HepG2 (cell line): ENCODE measurements at regions of chr15 and their contacts with region 1.

Region 1: GRCh38 chr15:60682115-60682514 is 203.2 kb upstream of the ICE2 start:
- DNase-seq: no peak
- ATAC-seq: no peak
- H3K4me3 ChIP-seq: no peak overlapping the region
- H3K27ac ChIP-seq: no peak overlapping the region
- H3K4me1 ChIP-seq: 0 out of 2 replicates have a peak, but pooled peaks cover 8% of the 10 kb centered on the region
- H3K27me3 ChIP-seq: peaks cover 0 to 14% of the 10 kb centered on the region in 2 experiments; a peak in 3 of 5 replicates
- CTCF ChIP-seq: no peak
- EP300 ChIP-seq: no peak
- POLR2A ChIP-seq: no peak
- RAD21 ChIP-seq: no peak

Region 2: DNA sequence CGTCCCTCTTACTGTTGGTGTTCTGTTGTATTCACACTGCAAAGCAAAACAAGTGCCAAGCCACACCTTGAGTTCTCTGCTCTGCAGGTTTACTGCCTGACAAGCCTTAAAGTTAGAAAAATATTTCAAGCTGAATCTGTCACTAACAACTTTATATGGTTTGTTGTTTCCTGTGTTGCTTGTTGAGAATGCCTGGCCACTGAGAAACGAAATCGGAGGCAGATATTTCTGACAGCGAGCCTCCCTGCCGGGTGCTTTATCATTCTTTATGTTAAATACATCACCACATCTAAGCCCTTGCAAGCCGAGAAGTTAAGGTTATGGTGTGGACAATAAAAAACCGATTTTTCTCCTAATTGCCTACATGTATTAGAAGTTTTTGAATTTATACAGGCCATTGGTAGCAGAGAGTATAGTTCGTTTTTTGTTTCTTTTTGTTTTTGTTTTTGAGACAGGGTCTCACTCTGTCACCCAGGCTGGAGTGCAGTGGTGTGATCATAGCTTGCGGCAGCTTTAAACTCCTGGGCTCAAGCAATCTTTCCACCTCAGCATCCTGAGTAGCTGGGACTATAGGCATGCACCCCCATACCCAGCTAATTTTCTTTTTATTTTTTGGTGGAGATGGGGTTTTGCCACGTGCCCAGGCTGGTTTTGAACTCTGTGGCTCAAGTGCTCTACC is 14.8 kb before region 1 on chr15:
- CTCF ChIA-PET with region 1: no interaction called
- POLR2A ChIA-PET with region 1: no interaction called
- in situ Hi-C with region 1: no loop called
- intact Hi-C with region 1: no loop called
- DNase-seq: no peak
- ATAC-seq: no peak
- H3K4me3 ChIP-seq: no peak overlapping the region
- H3K27ac ChIP-seq: no peak overlapping the region
- H3K4me1 ChIP-seq: no peaks in the 10 kb centered on the region
- H3K27me3 ChIP-seq: peaks cover 1 to 41% of the 10 kb centered on the region in 2 experiments; a peak in 4 of 5 replicates
- CTCF ChIP-seq: no peak
- EP300 ChIP-seq: no peak
- POLR2A ChIP-seq: no peak
- RAD21 ChIP-seq: no peak

Region 3: DNA sequence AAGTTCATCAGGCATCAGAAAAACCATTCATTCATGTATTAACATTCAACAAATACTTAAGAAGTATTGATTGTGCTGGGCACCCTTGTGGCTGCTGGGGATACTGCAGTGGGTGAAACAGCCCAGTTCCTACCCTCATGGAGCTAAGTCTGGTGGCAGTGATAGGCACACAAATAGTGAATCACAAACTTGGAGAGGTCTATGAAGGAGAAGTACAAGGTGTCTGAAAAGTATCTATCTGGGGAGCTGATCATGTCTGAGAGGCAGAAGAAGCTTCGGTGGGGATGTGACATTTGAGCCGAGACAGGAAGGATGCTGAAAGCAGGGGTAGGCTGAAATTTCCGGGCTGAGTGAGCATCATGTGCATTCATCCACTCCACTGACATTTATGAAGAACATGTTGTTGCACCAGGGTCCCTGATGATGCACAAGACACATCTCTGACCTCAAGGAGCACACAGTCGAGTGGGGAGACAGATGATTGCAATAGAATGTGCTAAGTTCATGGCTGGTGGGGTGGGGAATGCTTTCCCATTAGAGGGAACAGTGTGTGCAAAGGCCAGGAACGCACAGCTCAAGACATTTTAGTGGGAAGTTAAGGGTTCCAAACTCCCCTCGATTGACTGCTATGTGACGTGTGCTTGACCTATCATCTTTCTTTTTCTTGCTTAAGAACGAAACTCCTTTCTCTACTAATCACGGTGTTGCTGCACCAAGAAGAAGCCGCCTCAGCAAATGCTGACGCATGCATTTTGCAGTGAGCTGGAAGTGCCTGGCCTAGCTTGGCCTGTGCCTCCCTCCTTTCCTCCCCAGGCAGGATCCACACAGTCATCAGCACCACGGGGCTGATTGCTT is 105.9 kb after region 1 on chr15:
- CTCF ChIA-PET with region 1: no interaction called
- POLR2A ChIA-PET with region 1: no interaction called
- in situ Hi-C with region 1: no loop called
- intact Hi-C with region 1: loop called (anchors 10 kb)
- DNase-seq: no peak
- ATAC-seq: peak; percentile 62; the same call in 2 of the 3 replicates
- H3K4me3 ChIP-seq: no peak overlapping the region
- H3K27ac ChIP-seq: no peak overlapping the region
- H3K4me1 ChIP-seq: no peaks in the 10 kb centered on the region
- H3K27me3 ChIP-seq: peaks cover 3 to 19% of the 10 kb centered on the region in 2 experiments; a peak in 2 of 5 replicates
- CTCF ChIP-seq: peak; percentile 26; the same call in 1 of the 2 replicates
- EP300 ChIP-seq: no peak
- POLR2A ChIP-seq: no peak
- RAD21 ChIP-seq: no peak